PC-9 (cell line): ENCODE measurements at regions of chr2 and their contacts with region 1.

Region 1: DNA sequence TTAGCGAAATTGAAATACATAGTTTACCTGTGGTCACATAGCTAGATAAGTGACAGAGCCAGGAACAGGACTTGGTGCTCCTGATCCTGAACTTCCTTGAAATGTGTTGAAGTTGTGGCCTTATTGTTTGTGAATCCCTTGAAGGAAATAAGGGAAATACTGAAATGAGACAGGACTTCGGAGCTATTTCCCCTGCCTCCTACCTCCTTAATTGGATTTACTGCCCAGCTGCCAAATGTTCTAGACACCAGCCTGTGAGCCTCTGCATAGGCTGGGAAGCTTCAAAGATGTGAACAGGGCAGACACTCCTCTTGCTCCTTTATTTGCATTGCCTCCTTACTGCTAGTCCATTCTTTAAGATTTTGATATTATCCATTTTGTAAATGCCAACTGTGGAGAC is 135.2 kb downstream of the PRPF40A start:
- DNase-seq: no peak
- H3K4me3 ChIP-seq: no peak overlapping the region
- H3K27ac ChIP-seq: no peak overlapping the region
- H3K4me1 ChIP-seq: no peaks in the 10 kb centered on the region
- H3K27me3 ChIP-seq: no peaks in the 10 kb centered on the region
- CTCF ChIP-seq: no peak

Region 2: DNA sequence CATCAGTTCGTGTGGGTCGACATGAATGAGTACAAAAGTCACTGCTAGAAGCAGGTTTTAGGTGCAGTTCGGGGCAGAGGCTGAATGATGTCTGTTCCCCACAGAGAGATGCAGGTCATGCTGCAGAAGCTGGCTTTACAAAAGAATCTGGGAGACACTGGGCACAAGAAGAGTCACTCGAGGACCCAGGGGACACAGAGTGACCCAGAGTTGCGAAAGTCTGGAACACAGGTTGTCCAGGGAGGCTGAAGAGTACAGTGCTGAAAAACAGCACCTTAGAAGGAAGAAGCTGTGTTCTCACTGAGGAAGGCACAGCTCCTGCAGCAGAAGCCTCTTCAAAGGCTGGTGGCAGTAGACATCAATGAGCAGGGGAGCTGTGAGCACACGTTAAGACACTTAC is 498.0 kb before region 1 on chr2:
- CTCF ChIA-PET with region 1: no interaction called
- POLR2A ChIA-PET with region 1: interaction called, 11 read pairs
- intact Hi-C with region 1: no loop called
- DNase-seq: no peak
- H3K4me3 ChIP-seq: no peak overlapping the region
- H3K27ac ChIP-seq: no peak overlapping the region
- H3K4me1 ChIP-seq: no peaks in the 10 kb centered on the region
- H3K27me3 ChIP-seq: no peaks in the 10 kb centered on the region
- CTCF ChIP-seq: no peak

Region 3: DNA sequence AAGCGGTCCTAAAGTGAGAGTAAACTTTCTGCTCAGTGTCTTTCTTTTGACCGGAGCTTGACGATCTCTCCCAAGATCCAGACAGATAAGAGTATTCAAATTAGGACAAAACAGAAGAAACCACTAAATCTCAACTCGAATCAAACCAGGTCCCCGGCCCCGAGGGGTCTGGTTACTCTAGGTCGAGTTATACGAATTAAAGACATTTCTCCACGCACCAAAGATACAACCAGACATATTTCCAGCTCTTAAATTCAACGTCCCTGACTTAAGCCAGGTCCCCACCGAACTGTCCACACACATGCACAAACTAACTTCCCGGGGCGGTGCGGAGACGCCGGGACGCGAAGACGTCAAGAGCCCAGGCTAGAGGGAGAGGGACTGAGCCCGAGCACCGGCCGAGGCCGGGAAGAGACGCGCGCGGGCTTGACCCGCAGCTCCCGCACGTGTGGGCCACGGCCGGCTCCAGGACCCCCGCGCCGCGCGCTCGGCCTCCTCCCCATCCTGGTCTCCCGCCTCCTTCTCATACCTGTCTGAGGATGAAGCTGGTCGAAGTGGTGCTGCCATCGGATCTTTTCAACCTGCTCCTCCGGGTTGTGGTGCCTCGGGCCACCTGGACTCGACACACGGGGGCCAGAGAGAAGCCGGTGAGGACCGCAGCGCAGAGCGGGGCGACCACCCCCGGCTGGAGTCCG is 484.1 kb before region 1 on chr2:
- CTCF ChIA-PET with region 1: no interaction called
- POLR2A ChIA-PET with region 1: no interaction called
- intact Hi-C with region 1: no loop called
- DNase-seq: peak in 1 of 2 experiments; percentile 12
- H3K4me3 ChIP-seq: peak overlapping the region; percentile 66
- H3K27ac ChIP-seq: no peak overlapping the region
- H3K4me1 ChIP-seq: peaks cover 9% of the 10 kb centered on the region; the same call in 1 of the 2 replicates
- H3K27me3 ChIP-seq: peaks cover 70% of the 10 kb centered on the region
- CTCF ChIP-seq: no peak

Region 4: GRCh38 chr2:152354909-152355308 is 227.2 kb before region 1 on chr2:
- CTCF ChIA-PET with region 1: no interaction called
- POLR2A ChIA-PET with region 1: no interaction called
- intact Hi-C with region 1: no loop called
- DNase-seq: no peak
- H3K4me3 ChIP-seq: no peak overlapping the region
- H3K27ac ChIP-seq: no peak overlapping the region
- H3K4me1 ChIP-seq: no peaks in the 10 kb centered on the region
- H3K27me3 ChIP-seq: no peaks in the 10 kb centered on the region
- CTCF ChIP-seq: no peak

Region 5: GRCh38 chr2:152600698-152601097 is 18.6 kb after region 1 on chr2:
- CTCF ChIA-PET with region 1: no interaction called
- POLR2A ChIA-PET with region 1: no interaction called
- intact Hi-C with region 1: no loop called
- DNase-seq: peak in 1 of 2 experiments; percentile 32
- H3K4me3 ChIP-seq: no peak overlapping the region
- H3K27ac ChIP-seq: no peak overlapping the region
- H3K4me1 ChIP-seq: no peaks in the 10 kb centered on the region
- H3K27me3 ChIP-seq: no peaks in the 10 kb centered on the region
- CTCF ChIP-seq: no peak